ENCODE measurements at regions of chr11 and their contacts with region 1.

Region 1: GRCh38 chr11:11036848-11037732 is 179.2 kb upstream of the ZBED5 start:
- DNase-seq: peak; percentile 31 to 80
- ATAC-seq: peak; percentile 83 to 96; a peak in 4 of 6 replicates
- H3K4me3 ChIP-seq: no peak overlapping the region
- H3K27ac ChIP-seq: no peak overlapping the region
- H3K4me1 ChIP-seq: no peaks in the 10 kb centered on the region
- CTCF ChIP-seq: peak; percentile 75
- EP300 ChIP-seq: no peak
- POLR2A ChIP-seq: no peak
- RAD21 ChIP-seq: peak; percentile 76 to 79

Region 2: GRCh38 chr11:10694481-10695239 is 342.4 kb before region 1 on chr11:
- CTCF ChIA-PET with region 1: no interaction called
- POLR2A ChIA-PET with region 1: no interaction called
- DNase-seq: no peak
- ATAC-seq: peak in 1 of 2 experiments; percentile 59; a peak in 3 of 6 replicates
- H3K4me3 ChIP-seq: no peak overlapping the region
- H3K27ac ChIP-seq: no peak overlapping the region
- H3K4me1 ChIP-seq: no peaks in the 10 kb centered on the region
- CTCF ChIP-seq: no peak
- EP300 ChIP-seq: no peak
- POLR2A ChIP-seq: no peak
- RAD21 ChIP-seq: no peak

Region 3: DNA sequence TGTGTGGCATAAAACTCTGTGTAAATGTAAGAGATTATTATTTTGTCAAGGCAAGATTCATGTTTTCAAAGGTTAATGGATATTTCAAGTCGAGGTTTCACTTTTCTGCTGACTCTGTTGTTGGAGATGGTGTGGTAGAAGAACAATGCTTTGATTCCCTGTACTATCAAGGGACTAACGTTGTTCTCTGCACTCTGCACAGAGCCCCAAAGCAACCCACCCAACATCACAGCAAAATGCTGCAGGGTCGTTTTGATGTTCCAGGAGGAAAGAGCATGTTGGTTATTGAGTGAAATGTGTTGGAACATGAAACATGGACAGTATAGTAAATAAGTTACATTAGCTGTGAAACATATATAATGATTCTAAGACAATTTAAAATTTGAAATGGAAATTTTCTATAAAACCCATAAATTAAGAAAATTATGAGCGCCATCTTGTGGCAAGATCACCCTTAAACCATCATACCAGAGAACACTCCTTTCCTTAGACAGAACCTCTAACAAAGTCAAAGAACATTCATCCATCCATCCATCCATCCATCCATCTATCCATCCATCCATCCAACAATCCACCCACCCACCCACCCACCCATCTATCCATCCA is 14.9 kb before region 1 on chr11:
- CTCF ChIA-PET with region 1: interaction called, 44 read pairs
- POLR2A ChIA-PET with region 1: no interaction called
- DNase-seq: peak; percentile 16 to 55
- ATAC-seq: peak; percentile 48 to 77; a peak in 3 of 6 replicates
- H3K4me3 ChIP-seq: no peak overlapping the region
- H3K27ac ChIP-seq: peak overlapping the region; percentile 18 to 20; a peak in 2 of 6 replicates
- H3K4me1 ChIP-seq: peaks cover 9% of the 10 kb centered on the region
- CTCF ChIP-seq: peak; percentile 76
- EP300 ChIP-seq: no peak
- POLR2A ChIP-seq: no peak
- RAD21 ChIP-seq: peak; percentile 78 to 86

Region 4: GRCh38 chr11:11057472-11057854 is 20.4 kb after region 1 on chr11:
- CTCF ChIA-PET with region 1: interaction called, 13 read pairs
- POLR2A ChIA-PET with region 1: no interaction called
- DNase-seq: no peak
- ATAC-seq: no peak
- H3K4me3 ChIP-seq: no peak overlapping the region
- H3K27ac ChIP-seq: no peak overlapping the region
- H3K4me1 ChIP-seq: no peaks in the 10 kb centered on the region
- CTCF ChIP-seq: no peak
- EP300 ChIP-seq: no peak
- POLR2A ChIP-seq: no peak
- RAD21 ChIP-seq: no peak

Region 5: GRCh38 chr11:11065396-11065795 is 28.3 kb after region 1 on chr11:
- CTCF ChIA-PET with region 1: interaction called, 11 read pairs
- POLR2A ChIA-PET with region 1: no interaction called
- DNase-seq: no peak
- ATAC-seq: no peak
- H3K4me3 ChIP-seq: no peak overlapping the region
- H3K27ac ChIP-seq: no peak overlapping the region
- H3K4me1 ChIP-seq: no peaks in the 10 kb centered on the region
- CTCF ChIP-seq: no peak
- EP300 ChIP-seq: no peak
- POLR2A ChIP-seq: no peak
- RAD21 ChIP-seq: no peak

Region 6: GRCh38 chr11:11078344-11079086 is 41.4 kb after region 1 on chr11:
- CTCF ChIA-PET with region 1: interaction called, 16 read pairs
- POLR2A ChIA-PET with region 1: no interaction called
- DNase-seq: peak in 1 of 2 experiments; percentile 40
- ATAC-seq: peak in 1 of 2 experiments; percentile 72; a peak in 3 of 6 replicates
- H3K4me3 ChIP-seq: no peak overlapping the region
- H3K27ac ChIP-seq: no peak overlapping the region
- H3K4me1 ChIP-seq: no peaks in the 10 kb centered on the region
- CTCF ChIP-seq: peak; percentile 21; the same call in 1 of the 3 replicates
- EP300 ChIP-seq: no peak
- POLR2A ChIP-seq: no peak
- RAD21 ChIP-seq: peak in 1 of 2 experiments; percentile 43; a peak in 3 of 5 replicates

Measured in A549 (cell line).